ENCODE measurements at regions of chr1 and their contacts with region 1.

Region 1: DNA sequence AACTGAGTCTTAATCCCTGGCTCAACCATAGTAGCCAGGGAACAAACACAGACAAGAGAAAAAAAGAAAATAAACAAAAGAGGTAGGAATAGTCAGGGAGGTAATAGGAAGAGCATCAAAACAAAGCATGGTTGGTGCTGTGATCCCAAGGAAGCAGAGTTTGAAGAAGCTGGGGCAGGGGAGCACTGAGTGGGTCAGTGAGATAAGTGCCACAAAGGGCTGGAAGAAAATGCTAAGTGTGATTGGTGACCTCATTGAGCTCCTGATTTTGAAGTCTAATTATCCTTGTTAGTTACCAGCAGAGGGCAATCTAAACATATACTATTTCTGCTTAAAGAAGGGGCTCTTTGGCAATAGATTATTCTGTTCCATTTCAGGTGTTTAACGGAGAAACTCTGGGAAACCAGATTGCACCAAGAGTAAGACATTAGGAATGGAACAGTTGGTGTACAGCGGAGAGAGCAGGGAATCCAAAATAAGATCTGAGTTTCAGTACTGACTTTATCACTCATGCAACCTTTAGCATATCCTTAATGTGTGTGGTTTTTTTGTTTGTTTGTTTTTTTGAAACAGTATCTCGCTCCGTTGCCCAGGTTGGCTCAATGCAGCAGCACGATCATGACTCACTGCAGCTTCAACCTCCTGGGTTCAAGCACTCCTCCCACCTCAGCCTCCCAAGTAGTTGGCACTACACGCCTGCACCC is 30.7 kb upstream of the KIAA1614 start:
- DNase-seq: no peak
- H3K4me3 ChIP-seq: no peak overlapping the region
- CTCF ChIP-seq: peak; percentile 39

Region 2: GRCh38 chr1:180515864-180516388 is 366.0 kb before region 1 on chr1:
- CTCF ChIA-PET with region 1: interaction called, 17 read pairs
- POLR2A ChIA-PET with region 1: no interaction called
- DNase-seq: no peak
- H3K4me3 ChIP-seq: no peak overlapping the region
- CTCF ChIP-seq: peak; percentile 68

Region 3: DNA sequence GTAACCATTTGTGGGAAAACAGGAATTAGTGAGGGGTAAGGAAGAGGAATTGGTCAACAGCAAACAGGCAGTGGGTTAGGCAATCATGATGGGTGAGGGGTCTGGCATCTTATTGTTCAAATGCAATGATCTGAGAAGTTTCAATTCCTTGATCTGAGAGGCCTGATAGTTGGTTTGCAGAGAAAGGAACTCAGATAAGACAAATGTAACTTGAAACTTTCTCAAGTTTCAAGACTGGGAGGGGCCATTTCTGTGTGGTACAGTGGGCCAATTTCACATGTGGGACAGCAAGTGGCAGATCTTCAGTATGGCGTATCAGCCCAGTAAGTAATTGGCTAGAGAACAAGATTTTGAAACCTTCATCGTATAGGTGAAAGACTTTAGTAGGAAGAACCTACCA is 147.6 kb before region 1 on chr1:
- CTCF ChIA-PET with region 1: no interaction called
- POLR2A ChIA-PET with region 1: no interaction called
- DNase-seq: no peak
- H3K4me3 ChIP-seq: no peak overlapping the region
- CTCF ChIP-seq: no peak

Region 4: GRCh38 chr1:180854478-180854877 is 27.5 kb before region 1 on chr1:
- CTCF ChIA-PET with region 1: no interaction called
- POLR2A ChIA-PET with region 1: no interaction called
- DNase-seq: no peak
- H3K4me3 ChIP-seq: no peak overlapping the region
- CTCF ChIP-seq: no peak

Region 5: GRCh38 chr1:180893614-180894013 is 11.7 kb after region 1 on chr1:
- CTCF ChIA-PET with region 1: interaction called, 10 read pairs
- POLR2A ChIA-PET with region 1: no interaction called
- DNase-seq: no peak
- H3K4me3 ChIP-seq: no peak overlapping the region
- CTCF ChIP-seq: no peak

Region 6: DNA sequence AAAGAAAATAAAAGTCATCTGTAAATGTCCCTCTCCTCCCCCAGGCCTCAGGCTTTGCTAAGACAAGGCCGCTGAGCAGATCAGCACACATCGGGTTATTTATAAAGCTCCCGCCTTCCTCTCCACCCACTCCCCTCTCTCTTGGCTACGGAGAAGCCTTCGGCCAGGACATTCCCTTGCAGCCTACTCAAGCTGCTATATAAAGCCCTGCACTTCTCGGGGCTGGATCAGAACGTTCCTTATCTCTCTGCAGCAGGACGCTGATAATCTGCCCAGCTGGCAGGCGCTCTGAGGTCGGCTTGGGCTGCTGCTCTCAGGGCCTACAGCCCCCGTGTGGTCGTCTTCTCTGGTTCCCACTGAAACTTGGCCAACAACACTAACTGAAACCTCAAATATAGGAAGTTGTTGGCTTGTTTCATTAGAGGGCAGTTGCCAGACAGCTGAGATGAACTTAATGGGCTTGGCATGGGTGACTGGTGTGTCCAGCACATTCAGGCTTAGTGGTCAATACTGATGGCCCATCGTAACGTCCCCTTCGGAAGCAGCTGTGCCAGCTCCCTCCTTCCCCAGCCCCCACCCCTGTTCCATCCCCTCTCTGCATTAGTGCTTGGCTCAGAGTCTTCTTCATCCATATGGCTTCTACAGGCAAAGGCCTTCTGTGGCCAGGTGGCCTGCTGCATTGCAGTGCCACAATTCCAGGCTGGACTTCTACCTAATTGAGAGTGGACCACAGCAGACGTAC is 271.1 kb after region 1 on chr1:
- CTCF ChIA-PET with region 1: interaction called, 16 read pairs
- POLR2A ChIA-PET with region 1: no interaction called
- DNase-seq: peak; percentile 34
- H3K4me3 ChIP-seq: no peak overlapping the region
- CTCF ChIP-seq: no peak

Region 7: DNA sequence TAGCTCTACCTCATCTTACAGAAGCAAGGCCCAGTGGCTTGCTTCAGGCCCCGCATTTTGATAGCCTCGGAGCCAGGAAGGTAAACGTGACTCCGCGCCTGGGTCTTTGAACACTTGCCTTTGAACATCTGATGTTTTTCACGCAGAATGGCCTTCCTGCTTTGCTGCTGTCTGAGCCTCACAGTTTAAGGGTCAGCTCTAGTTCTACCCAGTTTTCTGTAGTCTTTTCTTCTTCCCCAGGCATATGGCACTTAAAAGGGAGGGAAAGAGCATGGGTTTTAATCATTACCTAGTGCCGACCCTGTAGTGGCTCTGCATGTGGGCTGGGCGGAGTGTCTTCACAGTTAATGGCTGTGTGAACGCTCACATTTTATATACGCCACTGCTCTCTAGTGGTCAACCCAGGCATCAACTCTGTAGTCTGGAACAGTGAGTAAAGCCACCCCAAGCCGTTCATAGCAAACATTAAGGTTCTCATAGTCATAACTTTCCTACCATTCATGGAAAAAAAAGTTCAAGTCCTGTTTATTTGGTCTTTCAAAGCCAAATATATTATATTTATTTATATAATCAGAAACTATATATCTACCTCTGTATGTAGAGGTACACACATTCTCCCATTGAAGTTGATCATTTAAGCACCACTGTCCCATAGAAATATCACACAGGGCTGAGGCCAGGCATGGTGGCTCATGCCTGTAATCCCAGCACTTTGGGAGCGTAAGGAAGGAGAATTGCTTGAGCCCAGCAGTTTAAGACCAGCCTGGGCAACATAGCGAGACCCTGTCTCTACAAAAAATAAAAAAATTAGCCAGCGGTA is 284.6 kb after region 1 on chr1:
- CTCF ChIA-PET with region 1: interaction called, 174 read pairs
- POLR2A ChIA-PET with region 1: interaction called, 3 read pairs
- DNase-seq: peak; percentile 12
- H3K4me3 ChIP-seq: no peak overlapping the region
- CTCF ChIP-seq: peak; percentile 78

Measured in AG04449 (cell line).